ENCODE measurements at regions of chr19 and their contacts with region 1.

Region 1: GRCh38 chr19:56090931-56091490 is 30.1 kb downstream of the ZNF787 start:
- DNase-seq: peak; percentile 86
- H3K4me3 Mint-ChIP-seq: peak overlapping the region; percentile 81
- H3K27ac Mint-ChIP-seq: peak overlapping the region; percentile 91
- H3K4me1 Mint-ChIP-seq: peaks cover 25% of the 10 kb centered on the region
- H3K27me3 Mint-ChIP-seq: no peaks in the 10 kb centered on the region
- CTCF ChIP-seq: no peak

Region 2: GRCh38 chr19:55966589-55966988 is 124.4 kb before region 1 on chr19:
- CTCF ChIA-PET with region 1: no interaction called
- POLR2A ChIA-PET with region 1: no interaction called
- intact Hi-C with region 1: no loop called
- DNase-seq: no peak
- H3K4me3 Mint-ChIP-seq: no peak overlapping the region
- H3K27ac Mint-ChIP-seq: no peak overlapping the region
- H3K4me1 Mint-ChIP-seq: no peaks in the 10 kb centered on the region
- H3K27me3 Mint-ChIP-seq: no peaks in the 10 kb centered on the region
- CTCF ChIP-seq: no peak

Region 3: DNA sequence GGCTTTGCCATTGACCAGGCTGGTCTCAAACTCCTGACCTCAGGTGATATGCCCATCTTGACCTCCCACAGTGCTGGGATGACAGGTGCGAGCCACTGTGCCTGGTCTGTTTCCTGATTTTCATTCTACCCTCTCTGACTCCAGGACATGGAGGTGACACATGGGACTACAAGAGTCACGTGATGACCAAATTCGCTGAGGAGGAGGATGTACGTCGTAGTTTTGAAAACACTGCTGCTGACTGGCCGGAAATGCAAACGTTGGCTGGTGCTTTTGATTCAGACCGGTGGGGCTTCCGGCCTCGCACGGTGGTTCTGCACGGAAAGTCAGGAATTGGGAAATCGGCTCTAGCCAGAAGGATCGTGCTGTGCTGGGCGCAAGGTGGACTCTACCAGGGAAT is 64.2 kb before region 1 on chr19:
- CTCF ChIA-PET with region 1: no interaction called
- POLR2A ChIA-PET with region 1: no interaction called
- intact Hi-C with region 1: no loop called
- DNase-seq: no peak
- H3K4me3 Mint-ChIP-seq: no peak overlapping the region
- H3K27ac Mint-ChIP-seq: no peak overlapping the region
- H3K4me1 Mint-ChIP-seq: no peaks in the 10 kb centered on the region
- H3K27me3 Mint-ChIP-seq: no peaks in the 10 kb centered on the region
- CTCF ChIP-seq: no peak

Region 4: GRCh38 chr19:56080669-56081401 is 10.2 kb before region 1 on chr19:
- CTCF ChIA-PET with region 1: interaction called, 25 read pairs
- POLR2A ChIA-PET with region 1: interaction called, 5 read pairs
- intact Hi-C with region 1: no loop called
- DNase-seq: peak; percentile 73
- H3K4me3 Mint-ChIP-seq: peak overlapping the region; percentile 55
- H3K27ac Mint-ChIP-seq: peak overlapping the region; percentile 67
- H3K4me1 Mint-ChIP-seq: peaks cover 9% of the 10 kb centered on the region
- H3K27me3 Mint-ChIP-seq: no peaks in the 10 kb centered on the region
- CTCF ChIP-seq: peak; percentile 41

Region 5: GRCh38 chr19:56121180-56122167 is 30.5 kb after region 1 on chr19 and contains the start of gene ZNF787:
- CTCF ChIA-PET with region 1: no interaction called
- POLR2A ChIA-PET with region 1: interaction called, 17 read pairs
- intact Hi-C with region 1: loop called (anchors 2 kb)
- DNase-seq: peak; percentile 97
- H3K4me3 Mint-ChIP-seq: peak within 1 kb of the TSS; percentile 83
- H3K27ac Mint-ChIP-seq: peak within 1 kb of the TSS; percentile 94
- H3K4me1 Mint-ChIP-seq: peaks cover 19% of the 10 kb centered on the region
- H3K27me3 Mint-ChIP-seq: no peaks in the 10 kb centered on the region
- CTCF ChIP-seq: no peak
- total RNA-seq, gene ZNF787: 58.2 and 68.6 TPM in 2 replicates

Region 6: DNA sequence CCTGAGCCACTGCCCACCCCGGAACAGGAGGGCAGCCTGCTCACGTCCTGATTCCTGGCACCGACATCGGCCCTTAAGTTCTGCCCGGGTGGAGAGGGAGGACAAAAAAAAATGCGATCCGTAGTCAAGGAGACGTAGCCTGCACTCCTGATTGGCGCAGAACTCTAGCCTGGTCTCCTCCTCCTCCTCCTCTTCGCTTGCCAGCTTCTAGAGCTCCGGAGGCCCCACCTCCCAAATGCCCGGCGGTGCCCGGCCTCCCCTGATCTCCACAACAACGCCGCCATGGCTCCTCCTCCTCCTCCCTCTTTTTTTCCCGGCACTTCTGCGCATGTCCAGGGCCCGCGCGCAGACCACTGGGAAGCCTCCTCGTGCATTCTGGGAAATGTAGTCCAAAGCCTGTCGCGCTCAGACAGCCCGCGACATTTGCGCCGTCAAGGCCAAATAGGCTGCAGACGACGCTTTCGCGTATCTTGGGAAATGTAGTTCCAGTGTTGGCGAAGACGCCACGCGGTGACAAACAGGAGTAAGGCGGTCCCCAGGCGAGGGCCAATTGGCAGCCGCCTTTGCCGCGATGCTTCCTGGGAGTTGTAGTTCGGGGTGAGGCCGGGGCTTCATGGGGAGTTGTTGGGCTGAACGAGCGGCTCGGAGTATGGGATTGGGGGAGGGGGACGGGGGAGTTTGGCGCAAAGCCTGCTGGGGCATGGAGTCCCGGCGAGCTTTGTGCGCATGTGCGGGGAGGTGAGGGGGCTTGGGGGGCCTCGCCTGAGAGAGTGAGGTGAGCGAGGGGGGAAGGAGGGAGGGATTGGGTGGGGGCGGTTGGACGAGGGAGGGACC is 49.8 kb after region 1 on chr19 and contains the start of gene ZNF444:
- CTCF ChIA-PET with region 1: no interaction called
- POLR2A ChIA-PET with region 1: interaction called, 10 read pairs
- intact Hi-C with region 1: loop called (anchors 5 kb)
- DNase-seq: peak; percentile 99
- H3K4me3 Mint-ChIP-seq: peak within 1 kb of the TSS; percentile 83
- H3K27ac Mint-ChIP-seq: peak within 1 kb of the TSS; percentile 86
- H3K4me1 Mint-ChIP-seq: peaks cover 36% of the 10 kb centered on the region
- H3K27me3 Mint-ChIP-seq: no peaks in the 10 kb centered on the region
- CTCF ChIP-seq: no peak
- total RNA-seq, gene ZNF444: 26.6 and 28.1 TPM in 2 replicates

Region 7: DNA sequence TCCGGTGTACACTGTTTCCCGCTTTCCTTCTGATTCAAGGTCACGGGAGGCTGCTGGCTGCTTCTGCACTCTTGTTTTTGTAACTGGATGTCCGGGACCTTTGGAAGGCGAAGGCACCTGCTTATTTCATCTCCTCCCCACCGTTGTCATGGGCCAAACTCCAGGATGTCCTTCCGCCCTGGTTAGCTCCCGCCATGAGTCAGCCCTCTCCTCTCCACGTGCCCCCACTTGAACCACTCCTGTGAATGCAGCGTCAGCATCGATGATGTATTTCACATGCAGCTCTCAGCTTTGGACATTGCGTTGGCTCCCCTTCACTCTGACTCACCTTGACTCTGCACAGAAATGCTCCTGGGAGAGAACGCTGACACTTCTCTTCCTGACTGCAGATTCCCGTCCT is 79.2 kb after region 1 on chr19:
- CTCF ChIA-PET with region 1: interaction called, 4 read pairs
- POLR2A ChIA-PET with region 1: no interaction called
- intact Hi-C with region 1: loop called (anchors 5 kb)
- DNase-seq: peak; percentile 93
- H3K4me3 Mint-ChIP-seq: peak overlapping the region; percentile 0
- H3K27ac Mint-ChIP-seq: no peak overlapping the region
- H3K4me1 Mint-ChIP-seq: peaks cover 7% of the 10 kb centered on the region
- H3K27me3 Mint-ChIP-seq: no peaks in the 10 kb centered on the region
- CTCF ChIP-seq: no peak

Region 8: GRCh38 chr19:56314562-56315077 is 223.6 kb after region 1 on chr19 and contains the start of gene ZSCAN5A:
- CTCF ChIA-PET with region 1: interaction called, 5 read pairs
- POLR2A ChIA-PET with region 1: interaction called, 19 read pairs
- intact Hi-C with region 1: loop called (anchors 10 kb)
- DNase-seq: peak; percentile 97
- H3K4me3 Mint-ChIP-seq: peak within 1 kb of the TSS; percentile 81
- H3K27ac Mint-ChIP-seq: peak within 1 kb of the TSS; percentile 100
- H3K4me1 Mint-ChIP-seq: peaks cover 18% of the 10 kb centered on the region
- H3K27me3 Mint-ChIP-seq: no peaks in the 10 kb centered on the region
- CTCF ChIP-seq: no peak
- total RNA-seq, gene ZSCAN5A: 6.2 and 8.1 TPM in 2 replicates

Measured in MCF 10A (cell line).